Dorsolateral prefrontal cortex (tissue), 120 donors: ENCODE measurements at regions of chr5 and their contacts with region 1.

Region 1: DNA sequence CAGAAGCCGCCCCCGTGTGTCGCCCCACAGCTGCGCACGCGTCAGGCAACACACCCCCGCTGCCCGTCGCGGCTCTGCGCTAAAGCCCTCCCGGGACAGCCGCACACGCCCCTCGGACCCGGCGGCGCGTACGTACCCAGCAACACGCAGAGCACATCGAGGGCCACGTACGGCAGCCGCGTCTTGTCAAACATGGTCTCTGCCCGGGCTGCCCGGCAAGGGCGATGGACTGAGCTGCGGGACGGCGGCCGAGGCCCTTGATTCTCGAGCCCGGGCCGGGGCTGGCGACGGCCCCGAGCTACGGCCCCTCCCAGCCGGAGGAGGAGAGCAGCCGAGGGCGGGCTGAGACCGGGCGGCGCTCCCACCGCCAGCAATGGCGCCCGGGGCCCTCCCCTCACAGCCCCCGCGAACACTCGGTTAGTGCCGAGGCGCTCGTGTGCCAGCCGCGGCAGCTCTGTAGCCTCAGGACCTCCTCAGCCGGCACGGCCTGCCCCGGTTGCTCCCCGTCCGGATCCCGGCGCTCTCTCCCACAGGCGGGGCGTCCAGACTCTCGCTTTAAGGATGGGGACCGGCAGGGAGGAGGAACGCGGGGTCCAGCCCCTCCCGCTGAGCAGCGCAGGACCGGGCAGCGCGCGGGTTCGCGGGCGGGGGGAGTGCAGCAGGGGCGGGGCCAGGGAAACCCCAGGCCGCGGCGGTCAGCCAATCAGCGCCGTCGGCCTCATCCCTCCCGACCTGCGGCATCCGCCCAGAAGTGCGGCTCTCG is at the start of gene PLPP1:
- DNase-seq: peak; percentile 91 to 98 (median 94)
- H3K4me3 ChIP-seq: peak within 1 kb of the TSS; percentile 60 to 98 (median 88)
- H3K27ac ChIP-seq: peak within 1 kb of the TSS; percentile 89 to 100 (median 99)
- H3K27me3 ChIP-seq: no peaks in the 10 kb centered on the region
- CTCF ChIP-seq: peak in 29 of 56 donors; percentile 2 to 52 (median 20)
- total RNA-seq, gene PLPP1: 42.8 to 88.1 (median 59.2) TPM

Region 2: GRCh38 chr5:55344392-55344992 is 190.1 kb before region 1 on chr5:
- intact Hi-C with region 1: loop called in 1 of 2 experiments (anchors 10 kb)
- DNase-seq: peak in 9 of 10 donors; percentile 47 to 90 (median 56)
- H3K4me3 ChIP-seq: peak overlapping the region in 1 of 59 donors; percentile 3
- H3K27ac ChIP-seq: peak overlapping the region in 33 of 59 donors; percentile 2 to 75 (median 36)
- H3K27me3 ChIP-seq: no peaks in the 10 kb centered on the region
- CTCF ChIP-seq: peak; percentile 79 to 98 (median 91)

Region 3: GRCh38 chr5:55407059-55407684 is 127.4 kb before region 1 on chr5:
- intact Hi-C with region 1: loop called in 1 of 2 experiments (anchors 10 kb)
- DNase-seq: peak in 3 of 10 donors; percentile 18 to 57 (median 42)
- H3K4me3 ChIP-seq: no peak overlapping the region
- H3K27ac ChIP-seq: peak overlapping the region in 7 of 59 donors; percentile 6 to 40 (median 14)
- H3K27me3 ChIP-seq: no peaks in the 10 kb centered on the region
- CTCF ChIP-seq: peak in 55 of 56 donors; percentile 42 to 90 (median 73)

Region 4: GRCh38 chr5:55439008-55439407 is 95.6 kb before region 1 on chr5:
- intact Hi-C with region 1: loop called (anchors 5 to 10 kb)
- DNase-seq: peak in 2 of 10 donors; percentile 20 to 51
- H3K4me3 ChIP-seq: peak overlapping the region in 1 of 59 donors; percentile 26
- H3K27ac ChIP-seq: peak overlapping the region; percentile 56 to 95 (median 87)
- H3K27me3 ChIP-seq: no peaks in the 10 kb centered on the region
- CTCF ChIP-seq: no peak

Region 5: GRCh38 chr5:55497712-55498111 is 36.9 kb before region 1 on chr5:
- intact Hi-C with region 1: loop called in 1 of 2 experiments (anchors 5 kb)
- DNase-seq: peak in 1 of 10 donors; percentile 8
- H3K4me3 ChIP-seq: no peak overlapping the region
- H3K27ac ChIP-seq: peak overlapping the region in 33 of 59 donors; percentile 2 to 78 (median 43)
- H3K27me3 ChIP-seq: no peaks in the 10 kb centered on the region
- CTCF ChIP-seq: no peak